AG04449 (cell line): ENCODE measurements at regions of chr2 and their contacts with region 1.

Region 1: DNA sequence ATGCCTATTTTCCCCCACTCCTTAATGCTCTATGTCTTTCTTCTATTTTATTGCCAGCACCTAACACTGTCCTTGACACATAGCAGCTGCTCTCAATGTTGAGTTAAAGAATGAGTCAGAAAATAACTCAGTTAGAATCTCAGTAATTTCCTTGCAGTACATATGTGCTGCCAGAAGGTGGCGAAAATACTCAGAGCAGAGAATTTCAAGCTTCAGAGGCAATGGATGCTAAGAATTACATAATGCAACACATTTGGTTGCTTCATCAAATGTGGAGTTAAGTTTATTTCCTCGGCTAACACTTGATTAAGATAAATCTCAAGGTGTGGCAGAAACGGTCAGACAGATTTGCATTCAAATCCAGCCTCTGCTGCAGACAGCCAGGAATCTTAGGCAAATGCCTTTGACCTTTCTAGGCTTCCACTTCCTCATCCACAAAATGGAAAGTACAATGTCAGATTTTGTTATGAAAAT is 105.6 kb downstream of the VSNL1 start:
- DNase-seq: peak; percentile 41
- H3K4me3 ChIP-seq: no peak overlapping the region
- CTCF ChIP-seq: peak; percentile 71

Region 2: GRCh38 chr2:17557596-17557995 is 88.5 kb before region 1 on chr2:
- CTCF ChIA-PET with region 1: no interaction called
- POLR2A ChIA-PET with region 1: no interaction called
- DNase-seq: no peak
- H3K4me3 ChIP-seq: no peak overlapping the region
- CTCF ChIP-seq: no peak

Region 3: GRCh38 chr2:17628349-17629261 is 17.5 kb before region 1 on chr2:
- CTCF ChIA-PET with region 1: interaction called, 20 read pairs
- POLR2A ChIA-PET with region 1: no interaction called
- DNase-seq: no peak
- H3K4me3 ChIP-seq: no peak overlapping the region
- CTCF ChIP-seq: no peak

Region 4: DNA sequence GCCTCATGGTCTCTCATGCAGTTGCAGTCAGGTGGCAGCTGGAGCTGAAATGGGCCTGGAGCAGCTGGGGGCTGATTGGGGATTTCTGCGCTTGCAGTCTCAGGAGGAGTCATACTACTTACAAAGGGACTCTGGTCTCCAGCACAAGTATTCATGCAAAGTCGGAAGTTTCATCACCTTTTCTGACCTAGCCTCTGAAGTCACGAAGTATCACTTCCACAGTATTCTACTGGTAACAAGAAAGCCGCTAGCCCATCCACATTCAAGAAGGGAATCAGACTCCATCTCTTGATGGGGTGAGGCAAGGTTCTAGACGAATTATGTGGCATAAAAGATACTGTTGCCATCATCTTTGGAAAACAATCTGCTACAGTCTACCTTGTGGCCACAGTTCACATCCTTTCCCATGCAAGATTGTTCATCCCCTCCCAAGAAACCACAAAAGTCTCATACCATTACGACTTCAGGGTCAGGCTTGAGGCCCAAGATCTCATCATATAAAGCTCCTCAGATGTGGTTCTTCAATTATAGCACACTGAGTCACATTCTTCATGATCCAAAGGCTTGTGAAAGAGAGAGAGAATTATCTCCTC is 12.2 kb after region 1 on chr2:
- CTCF ChIA-PET with region 1: interaction called, 51 read pairs
- POLR2A ChIA-PET with region 1: no interaction called
- DNase-seq: peak; percentile 57
- H3K4me3 ChIP-seq: no peak overlapping the region
- CTCF ChIP-seq: no peak